ENCODE measurements at regions of chr4 and their contacts with region 1.

Region 1: GRCh38 chr4:138870737-138871554 is 144.6 kb upstream of the NOCT start:
- DNase-seq: peak; percentile 16
- H3K4me3 ChIP-seq: no peak overlapping the region
- CTCF ChIP-seq: peak; percentile 66

Region 2: GRCh38 chr4:138003248-138003647 is 867.7 kb before region 1 on chr4:
- CTCF ChIA-PET with region 1: no interaction called
- POLR2A ChIA-PET with region 1: no interaction called
- DNase-seq: no peak
- H3K4me3 ChIP-seq: no peak overlapping the region
- CTCF ChIP-seq: no peak

Region 3: GRCh38 chr4:138576684-138577083 is 294.3 kb before region 1 on chr4:
- CTCF ChIA-PET with region 1: interaction called, 15 read pairs
- POLR2A ChIA-PET with region 1: no interaction called
- DNase-seq: no peak
- H3K4me3 ChIP-seq: no peak overlapping the region
- CTCF ChIP-seq: peak; percentile 36

Region 4: DNA sequence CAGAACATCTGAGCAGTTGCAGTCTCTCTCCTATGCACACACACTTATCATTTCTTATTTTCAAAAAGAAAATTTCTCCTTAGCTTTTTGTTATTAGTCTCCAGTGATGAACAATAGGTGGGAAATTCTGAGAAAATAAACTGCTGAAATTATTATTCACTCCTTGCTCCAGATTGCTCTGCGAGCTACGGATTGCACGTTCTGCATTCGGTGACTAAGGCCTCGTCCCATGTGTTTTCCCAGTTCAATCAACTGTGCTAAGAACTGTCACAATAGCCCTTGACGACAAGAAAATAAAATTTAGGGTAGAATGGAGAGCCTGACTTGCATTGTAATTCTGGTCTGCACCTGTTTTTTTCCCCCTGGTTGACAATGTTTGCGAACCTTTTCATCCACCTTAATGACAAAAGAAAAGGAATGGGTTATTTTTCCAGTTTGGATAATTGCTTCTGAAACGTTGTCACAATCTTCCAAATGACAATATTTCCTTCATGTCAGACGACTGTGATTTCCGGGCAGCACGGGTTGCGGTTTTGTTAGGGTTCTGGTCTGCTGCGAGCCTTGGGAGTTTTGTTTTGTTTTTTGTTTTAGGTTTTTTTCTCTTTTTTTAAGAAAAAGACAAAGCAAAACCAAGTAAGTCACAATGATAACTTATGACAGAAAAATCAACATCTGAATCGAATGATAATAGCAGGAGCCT is 20.1 kb after region 1 on chr4:
- CTCF ChIA-PET with region 1: interaction called, 10 read pairs
- POLR2A ChIA-PET with region 1: no interaction called
- DNase-seq: no peak
- H3K4me3 ChIP-seq: no peak overlapping the region
- CTCF ChIP-seq: no peak

Region 5: DNA sequence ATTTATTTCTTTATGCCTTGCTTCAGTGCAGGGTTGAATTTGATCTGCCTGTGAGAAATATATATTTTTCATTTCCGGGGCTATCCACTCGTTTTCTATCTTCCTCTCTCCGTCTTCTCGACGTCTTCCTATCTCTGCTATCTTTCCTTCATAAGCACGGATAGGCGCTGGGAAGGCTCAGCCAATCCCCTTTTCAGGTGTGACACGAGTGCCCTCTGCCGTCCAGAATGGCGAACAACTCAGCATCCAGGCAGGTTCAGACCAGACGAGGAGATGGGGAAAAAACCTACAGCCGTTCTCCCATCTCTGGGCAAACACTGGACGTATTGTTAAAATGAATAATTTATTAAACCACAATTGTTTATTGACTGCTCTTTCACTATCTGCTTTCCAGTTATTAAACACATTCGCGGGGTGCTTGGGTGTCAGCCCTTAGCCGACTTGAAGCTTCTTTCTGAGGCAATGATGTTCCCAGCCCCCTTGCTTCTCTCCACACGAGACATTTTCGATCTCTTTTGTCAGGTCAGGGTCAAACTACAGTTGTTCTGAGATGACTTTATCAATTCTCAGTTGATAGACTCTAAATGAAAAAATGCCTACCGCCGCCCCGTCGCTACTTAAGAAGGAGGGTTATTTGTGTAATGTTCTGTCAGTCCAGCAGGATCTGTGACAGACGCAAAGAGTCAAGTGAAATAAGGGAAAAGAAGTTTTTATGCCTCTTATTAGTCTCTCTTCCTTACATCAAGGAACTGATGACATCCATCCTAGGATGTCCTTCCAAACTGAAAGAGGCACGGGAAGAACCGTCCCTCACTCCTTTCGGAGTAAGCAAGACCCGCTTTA is 48.4 kb after region 1 on chr4:
- CTCF ChIA-PET with region 1: interaction called, 14 read pairs
- POLR2A ChIA-PET with region 1: no interaction called
- DNase-seq: no peak
- H3K4me3 ChIP-seq: no peak overlapping the region
- CTCF ChIP-seq: peak; percentile 93

Region 6: DNA sequence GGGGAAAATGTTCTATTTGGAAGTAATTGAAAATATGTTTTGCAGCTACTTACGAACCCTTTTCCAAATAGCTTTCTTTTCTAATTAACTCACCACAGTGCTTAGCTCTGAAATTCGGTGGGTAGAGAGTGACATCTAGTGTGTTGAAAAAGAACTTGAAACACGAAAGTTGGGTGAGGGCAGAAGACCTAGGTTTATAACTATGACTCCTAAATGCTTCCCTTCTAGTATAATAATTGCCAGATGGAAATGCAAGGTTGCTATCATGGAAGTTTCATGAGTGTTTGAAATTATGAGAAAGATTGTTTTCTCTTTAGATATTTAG is 67.4 kb after region 1 on chr4:
- CTCF ChIA-PET with region 1: interaction called, 11 read pairs
- POLR2A ChIA-PET with region 1: no interaction called
- DNase-seq: no peak
- H3K4me3 ChIP-seq: no peak overlapping the region
- CTCF ChIP-seq: peak; percentile 17